PC-9 (cell line): ENCODE measurements at regions of chr10 and their contacts with region 1.

Region 1: GRCh38 chr10:103021897-103022286 is 103.8 kb downstream of the CNNM2 start:
- DNase-seq: no peak
- H3K4me3 ChIP-seq: no peak overlapping the region
- H3K27ac ChIP-seq: no peak overlapping the region
- H3K4me1 ChIP-seq: no peaks in the 10 kb centered on the region
- H3K27me3 ChIP-seq: no peaks in the 10 kb centered on the region
- CTCF ChIP-seq: no peak

Region 2: DNA sequence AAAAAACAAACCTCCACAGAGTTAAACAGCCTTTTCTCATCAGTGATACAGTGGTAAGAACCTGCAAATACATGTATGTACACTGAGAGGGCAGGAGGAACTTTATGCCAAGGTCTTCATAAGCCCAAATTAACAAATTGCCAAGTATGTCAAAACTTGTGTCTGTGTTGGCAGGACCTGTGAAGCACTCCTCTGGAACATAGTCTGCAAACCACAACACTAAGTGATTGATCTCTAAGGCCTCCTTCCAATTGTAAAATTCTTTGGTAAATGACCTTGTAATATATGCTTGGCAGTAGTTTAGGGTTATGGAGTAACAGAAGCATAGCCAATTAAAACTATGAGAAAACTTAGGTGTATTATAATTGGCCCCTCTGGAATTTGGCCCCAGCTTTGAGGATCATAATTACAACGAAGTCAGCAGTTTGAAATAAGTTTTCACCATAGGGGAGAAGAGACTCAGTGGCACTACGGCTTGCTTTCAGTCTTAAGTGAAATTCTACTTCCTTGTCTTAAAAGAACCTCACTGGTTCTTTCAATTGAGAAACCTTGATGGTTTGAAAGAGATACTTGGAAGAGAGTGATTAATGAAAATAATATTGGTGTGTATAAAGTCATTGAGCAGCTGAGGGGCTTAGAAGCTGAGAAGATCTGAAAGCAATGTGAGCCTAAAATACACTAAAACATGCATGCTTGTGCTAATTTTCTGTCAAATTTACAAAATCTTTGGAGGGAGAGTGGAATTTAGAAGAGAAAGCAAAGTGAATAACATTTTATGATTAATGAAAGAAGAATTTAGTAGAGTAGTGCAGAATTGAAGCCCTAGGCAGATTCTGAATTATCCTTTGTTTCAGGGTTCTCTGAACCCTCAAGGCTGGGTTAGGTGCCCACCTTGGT is 46.2 kb before region 1 on chr10:
- CTCF ChIA-PET with region 1: no interaction called
- POLR2A ChIA-PET with region 1: no interaction called
- intact Hi-C with region 1: no loop called
- DNase-seq: no peak
- H3K4me3 ChIP-seq: no peak overlapping the region
- H3K27ac ChIP-seq: no peak overlapping the region
- H3K4me1 ChIP-seq: no peaks in the 10 kb centered on the region
- H3K27me3 ChIP-seq: no peaks in the 10 kb centered on the region
- CTCF ChIP-seq: no peak

Region 3: DNA sequence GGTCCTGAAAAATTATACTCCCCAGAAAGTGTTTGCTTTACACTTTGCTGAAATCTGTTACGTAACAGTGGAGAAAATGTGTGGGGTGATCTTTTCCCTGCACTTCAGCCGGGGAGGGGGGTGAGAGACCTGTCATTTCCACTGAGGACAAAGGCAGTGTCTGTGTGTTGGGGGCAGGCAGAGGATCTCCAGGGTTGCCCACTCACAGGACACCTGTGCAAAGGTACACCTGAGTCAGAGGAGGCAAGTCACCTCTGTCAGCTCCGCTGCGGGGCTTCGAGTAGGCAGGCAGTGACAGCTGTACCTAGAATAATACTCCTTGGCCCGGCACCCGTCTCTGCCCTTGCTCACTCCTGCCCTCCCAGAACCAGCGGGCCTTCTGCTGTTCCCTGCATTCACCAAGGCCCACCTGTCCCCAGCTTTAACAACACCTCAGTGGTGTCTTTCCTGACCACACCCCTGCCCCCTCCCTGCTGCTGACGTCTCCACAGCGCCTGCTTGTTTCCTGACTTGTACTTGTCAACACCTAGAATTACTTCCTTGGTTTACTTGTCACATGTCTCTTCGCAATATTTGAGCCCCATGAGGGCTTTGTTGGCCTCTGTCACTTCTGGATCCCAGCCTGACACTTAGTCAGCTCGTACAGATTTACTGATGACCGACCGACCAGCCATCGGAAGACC is 630.8 kb after region 1 on chr10:
- CTCF ChIA-PET with region 1: no interaction called
- POLR2A ChIA-PET with region 1: no interaction called
- intact Hi-C with region 1: loop called (anchors 5 kb)
- DNase-seq: no peak
- H3K4me3 ChIP-seq: no peak overlapping the region
- H3K27ac ChIP-seq: no peak overlapping the region
- H3K4me1 ChIP-seq: no peaks in the 10 kb centered on the region
- H3K27me3 ChIP-seq: no peaks in the 10 kb centered on the region
- CTCF ChIP-seq: no peak